A673 (cell line): ENCODE measurements at regions of chr7 and their contacts with region 1.

Region 1: GRCh38 chr7:140924019-140924820 is 509 bp downstream of the BRAF start:
- DNase-seq: peak; percentile 40
- H3K4me3 ChIP-seq: peak overlapping the region; percentile 92
- H3K27ac ChIP-seq: peak overlapping the region; percentile 95
- H3K4me1 ChIP-seq: peaks cover 6% of the 10 kb centered on the region
- H3K27me3 ChIP-seq: no peaks in the 10 kb centered on the region
- CTCF ChIP-seq: 0 out of 2 replicates have a peak, but pooled peaks have one; percentile 33

Region 2: GRCh38 chr7:139645572-139646523 is 1278.4 kb before region 1 on chr7:
- CTCF ChIA-PET with region 1: no interaction called
- POLR2A ChIA-PET with region 1: no interaction called
- intact Hi-C with region 1: no loop called
- DNase-seq: peak; percentile 87
- H3K4me3 ChIP-seq: no peak overlapping the region
- H3K27ac ChIP-seq: no peak overlapping the region
- H3K4me1 ChIP-seq: no peaks in the 10 kb centered on the region
- H3K27me3 ChIP-seq: no peaks in the 10 kb centered on the region
- CTCF ChIP-seq: peak; percentile 89

Region 3: GRCh38 chr7:140479062-140479738 is 445.0 kb before region 1 on chr7 and contains the start of gene MKRN1:
- CTCF ChIA-PET with region 1: no interaction called
- POLR2A ChIA-PET with region 1: no interaction called
- intact Hi-C with region 1: loop called (anchors 10 kb)
- DNase-seq: peak; percentile 95
- H3K4me3 ChIP-seq: peak within 1 kb of the TSS; percentile 99
- H3K27ac ChIP-seq: peak within 1 kb of the TSS; percentile 81
- H3K4me1 ChIP-seq: peaks cover 4% of the 10 kb centered on the region
- H3K27me3 ChIP-seq: no peaks in the 10 kb centered on the region
- CTCF ChIP-seq: no peak
- total RNA-seq, gene MKRN1: 51.1 and 57.6 TPM in 2 replicates

Region 4: DNA sequence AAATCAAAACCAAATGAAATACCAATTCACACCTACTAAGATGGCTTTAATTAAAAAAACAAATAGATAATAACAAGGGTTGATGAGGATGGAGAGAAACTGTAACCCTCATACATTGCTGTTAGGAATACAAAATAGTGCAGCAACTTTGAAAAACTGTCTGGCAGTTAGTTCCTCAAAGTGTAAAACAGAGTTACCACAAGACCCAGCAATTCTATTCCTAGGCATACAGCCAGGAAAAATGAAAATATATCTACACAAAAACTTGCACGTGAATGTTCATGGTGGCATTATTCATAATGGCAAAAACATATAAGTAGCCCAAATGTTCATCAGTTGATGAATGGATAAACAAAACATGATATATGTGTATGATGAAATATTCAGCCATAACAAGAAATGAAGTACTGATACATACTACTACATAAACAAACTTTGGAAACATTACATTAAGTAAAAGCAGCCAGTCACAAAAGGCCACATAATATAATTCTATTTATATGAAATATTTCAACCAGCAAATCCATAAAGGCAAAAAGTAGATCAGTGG is 83.0 kb before region 1 on chr7:
- CTCF ChIA-PET with region 1: no interaction called
- POLR2A ChIA-PET with region 1: no interaction called
- intact Hi-C with region 1: loop called (anchors 5 kb)
- DNase-seq: no peak
- H3K4me3 ChIP-seq: no peak overlapping the region
- H3K27ac ChIP-seq: no peak overlapping the region
- H3K4me1 ChIP-seq: peaks cover 9% of the 10 kb centered on the region
- H3K27me3 ChIP-seq: no peaks in the 10 kb centered on the region
- CTCF ChIP-seq: no peak

Region 5: DNA sequence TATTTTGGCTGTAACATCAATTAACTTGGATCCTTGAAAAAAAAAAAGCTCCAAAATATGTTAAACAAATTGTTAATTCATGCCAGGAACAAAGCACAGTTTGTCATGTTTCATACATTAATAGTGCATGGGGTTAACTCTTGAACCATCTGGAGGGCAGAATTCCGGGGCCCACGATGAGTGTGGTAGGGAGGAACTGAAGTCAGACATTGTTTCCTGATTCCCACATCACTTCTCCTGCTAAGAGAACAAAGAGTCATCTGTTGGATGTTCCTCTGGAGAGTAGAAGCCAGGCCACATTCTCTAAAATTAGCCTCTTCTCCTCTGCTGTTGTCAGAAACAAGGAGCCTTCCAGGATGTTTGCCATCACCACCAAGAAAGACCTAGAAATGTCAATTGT is 204.3 kb after region 1 on chr7:
- CTCF ChIA-PET with region 1: no interaction called
- POLR2A ChIA-PET with region 1: no interaction called
- intact Hi-C with region 1: no loop called
- DNase-seq: no peak
- H3K4me3 ChIP-seq: no peak overlapping the region
- H3K27ac ChIP-seq: no peak overlapping the region
- H3K4me1 ChIP-seq: no peaks in the 10 kb centered on the region
- H3K27me3 ChIP-seq: no peaks in the 10 kb centered on the region
- CTCF ChIP-seq: no peak

Region 6: GRCh38 chr7:141452911-141453310 is 528.7 kb after region 1 on chr7:
- CTCF ChIA-PET with region 1: no interaction called
- POLR2A ChIA-PET with region 1: no interaction called
- intact Hi-C with region 1: no loop called
- DNase-seq: no peak
- H3K4me3 ChIP-seq: no peak overlapping the region
- H3K27ac ChIP-seq: no peak overlapping the region
- H3K4me1 ChIP-seq: no peaks in the 10 kb centered on the region
- H3K27me3 ChIP-seq: no peaks in the 10 kb centered on the region
- CTCF ChIP-seq: no peak